AG04449 (cell line): ENCODE measurements at regions of chr1 and their contacts with region 1.

Region 1: DNA sequence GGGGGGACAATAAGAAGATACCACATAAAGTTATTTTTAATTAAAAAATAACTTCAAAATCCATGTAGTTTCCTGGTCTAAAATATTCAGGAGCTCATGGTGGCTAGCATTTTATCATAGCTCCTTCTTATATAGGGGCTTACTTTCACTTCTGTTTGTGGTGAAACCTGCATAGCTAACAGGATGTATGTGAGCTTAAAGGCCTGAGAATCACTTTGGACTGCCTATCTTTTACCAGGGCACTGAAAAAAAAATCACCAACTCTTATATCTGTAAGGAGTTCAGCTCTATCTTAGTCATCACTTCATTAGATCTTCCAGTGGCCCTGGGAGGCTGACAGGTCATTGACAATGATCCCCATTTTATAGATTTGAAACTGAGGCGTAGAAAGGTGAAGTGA is 21.3 kb downstream of the UROD start:
- DNase-seq: no peak
- H3K4me3 ChIP-seq: no peak overlapping the region
- CTCF ChIP-seq: no peak

Region 2: DNA sequence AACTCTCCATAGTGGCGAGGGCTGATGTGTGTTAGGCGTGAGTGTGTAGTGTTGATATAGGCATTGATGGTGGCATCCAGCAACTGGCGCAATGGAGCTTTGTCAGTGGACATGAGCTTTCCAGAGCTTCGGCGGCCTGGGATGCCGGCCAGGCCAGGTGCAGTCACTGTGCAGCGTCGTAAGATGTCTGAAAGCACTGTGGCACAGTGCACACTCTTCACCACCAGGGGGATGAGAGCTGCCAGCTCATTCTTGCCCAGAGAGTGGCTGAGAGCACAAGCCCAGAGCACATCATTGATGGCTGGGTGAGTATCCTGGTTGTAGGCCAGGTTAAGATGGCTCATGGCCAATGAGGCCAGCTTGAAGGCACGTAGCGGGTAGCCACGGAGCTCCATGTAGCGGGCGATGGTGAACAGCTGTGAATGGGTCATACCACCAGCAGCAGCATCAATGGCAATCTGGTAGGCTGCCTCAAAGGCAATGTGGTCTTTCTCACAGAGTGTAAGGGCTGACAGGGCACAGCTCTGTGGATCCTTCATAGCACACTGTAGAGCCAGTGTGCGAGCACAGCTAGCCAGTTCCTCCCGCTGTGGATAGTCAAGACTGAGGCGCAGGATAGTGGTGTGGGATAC is 14.6 kb before region 1 on chr1:
- CTCF ChIA-PET with region 1: interaction called, 12 read pairs
- POLR2A ChIA-PET with region 1: no interaction called
- DNase-seq: no peak
- H3K4me3 ChIP-seq: no peak overlapping the region
- CTCF ChIP-seq: peak; percentile 94

Region 3: DNA sequence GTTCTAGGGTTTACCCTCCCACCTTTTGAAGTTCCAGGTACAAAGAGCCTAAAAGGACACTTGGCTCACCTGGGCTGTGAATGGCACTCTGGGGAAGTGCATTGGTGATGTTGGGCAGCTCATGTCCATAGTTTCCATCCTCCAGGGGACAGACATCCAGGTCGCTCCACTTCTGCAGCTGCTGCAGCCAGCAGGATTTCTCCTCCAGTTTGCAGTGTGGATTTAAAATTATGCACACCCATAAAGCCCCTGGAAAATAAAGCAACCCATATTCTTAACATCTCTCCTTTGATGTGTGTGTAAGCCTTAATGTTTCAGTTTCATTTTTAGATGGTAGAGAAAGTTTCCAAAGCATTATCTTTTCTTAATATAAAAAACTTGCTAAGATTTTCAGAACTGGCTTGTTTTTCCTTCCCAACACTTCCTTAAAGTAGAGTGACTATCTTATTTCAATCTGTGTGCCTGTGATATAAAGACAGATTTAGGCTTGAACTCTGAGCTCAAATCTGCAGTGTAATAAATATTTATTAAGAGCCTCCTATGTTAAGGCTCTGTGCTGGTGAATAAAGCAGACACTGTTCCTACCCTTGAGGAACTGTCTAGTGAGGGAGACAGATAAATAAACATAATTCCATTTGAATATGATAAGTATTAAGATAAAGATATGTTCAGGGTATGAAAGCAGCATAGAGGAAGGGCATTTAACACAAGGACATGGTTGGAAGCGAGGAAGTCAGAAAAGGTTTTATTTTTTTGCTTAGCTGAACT is 17.8 kb after region 1 on chr1:
- CTCF ChIA-PET with region 1: no interaction called
- POLR2A ChIA-PET with region 1: no interaction called
- DNase-seq: no peak
- H3K4me3 ChIP-seq: no peak overlapping the region
- CTCF ChIP-seq: no peak